Activated T-helper 2 cell treated with anti-CD3 and anti-CD28 coated beads, Interferon-gamma antibody, Interleukin-2, Interleukin-4, amounts not matched to agents 10 μg/mL and 5 μg/mL and 100 μg/mL, durations not matched to agents 14 hours and 24 hours and 36 hours (primary cell): ENCODE measurements at regions of chrX and their contacts with region 1.

Region 1: GRCh38 chrX:9708904-9709553 is 56.6 kb downstream of the GPR143 start:
- DNase-seq: peak; percentile 53
- H3K4me3 Mint-ChIP-seq: no peak overlapping the region
- H3K27ac Mint-ChIP-seq: peak overlapping the region; percentile 67
- H3K4me1 Mint-ChIP-seq: peaks cover 6% of the 10 kb centered on the region
- H3K27me3 Mint-ChIP-seq: no peaks in the 10 kb centered on the region

Region 2: DNA sequence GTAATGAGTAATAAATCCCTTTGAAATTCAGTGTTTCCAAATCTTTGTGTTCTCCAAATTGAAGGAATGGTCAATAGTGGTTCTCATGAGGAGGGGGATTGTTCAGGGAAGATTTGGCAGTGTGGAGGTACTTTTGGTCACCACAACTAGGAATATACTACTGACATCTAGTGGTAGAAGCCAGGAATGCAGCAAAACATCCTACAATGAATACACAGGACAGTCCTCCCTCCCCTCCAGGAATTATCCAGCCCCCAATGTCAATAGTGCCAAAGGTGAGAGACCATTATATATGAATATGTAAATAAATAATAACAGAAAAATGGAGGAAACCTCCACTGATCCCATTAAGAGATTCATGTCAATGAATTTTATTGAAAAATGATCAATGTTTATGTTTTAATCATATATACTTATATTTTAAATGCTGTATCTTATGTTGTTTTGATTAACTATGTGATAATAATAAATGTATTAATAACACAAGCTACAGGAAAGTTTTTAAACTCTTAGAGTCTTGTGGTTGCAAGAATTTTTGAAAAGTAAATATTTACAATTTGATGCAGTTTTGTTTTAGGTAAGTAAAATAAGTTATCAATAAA is 893.5 kb before region 1 on chrX:
- intact Hi-C with region 1: loop called (anchors 1 kb)
- DNase-seq: no peak
- H3K4me3 Mint-ChIP-seq: no peak overlapping the region
- H3K27ac Mint-ChIP-seq: no peak overlapping the region
- H3K4me1 Mint-ChIP-seq: no peaks in the 10 kb centered on the region
- H3K27me3 Mint-ChIP-seq: peaks cover 5% of the 10 kb centered on the region

Region 3: GRCh38 chrX:8971116-8971515 is 737.9 kb before region 1 on chrX:
- intact Hi-C with region 1: loop called (anchors 5 kb)
- DNase-seq: no peak
- H3K4me3 Mint-ChIP-seq: no peak overlapping the region
- H3K27ac Mint-ChIP-seq: no peak overlapping the region
- H3K4me1 Mint-ChIP-seq: peaks cover 5% of the 10 kb centered on the region
- H3K27me3 Mint-ChIP-seq: peaks cover 1% of the 10 kb centered on the region

Region 4: DNA sequence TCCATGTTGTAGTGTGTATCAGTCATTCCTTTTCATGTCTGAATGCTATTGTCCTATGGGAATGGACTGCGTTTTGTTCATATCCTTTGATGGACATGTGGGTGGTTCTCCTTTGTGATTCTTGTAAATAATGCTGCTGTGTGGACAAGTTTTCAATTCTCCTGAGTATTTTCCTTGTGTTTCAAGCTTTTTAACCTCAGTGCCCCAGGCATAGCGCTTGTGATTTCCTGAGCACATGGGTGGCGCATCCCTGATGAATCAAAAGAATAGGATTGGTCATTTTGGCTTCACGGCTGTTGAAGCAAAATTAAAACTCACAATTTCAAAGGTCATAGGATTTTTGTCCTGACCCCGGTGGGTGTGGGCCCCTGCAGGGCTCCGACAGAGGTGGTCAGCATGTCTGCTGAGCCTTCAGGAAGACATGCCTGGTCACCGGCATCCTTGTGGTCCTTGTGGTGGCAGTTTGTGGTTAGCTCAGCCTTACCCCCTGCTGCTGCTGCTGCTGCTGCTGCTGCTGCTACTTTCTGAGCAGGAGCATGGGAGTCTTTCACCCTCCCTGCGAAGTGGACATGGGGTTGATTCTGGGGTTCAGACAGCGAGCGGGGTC is 107.2 kb after region 1 on chrX:
- intact Hi-C with region 1: no loop called
- DNase-seq: no peak
- H3K4me3 Mint-ChIP-seq: no peak overlapping the region
- H3K27ac Mint-ChIP-seq: no peak overlapping the region
- H3K4me1 Mint-ChIP-seq: no peaks in the 10 kb centered on the region
- H3K27me3 Mint-ChIP-seq: peaks cover 14% of the 10 kb centered on the region